ENCODE measurements at regions of chr6 and their contacts with region 1.

Region 1: GRCh38 chr6:51339719-51340118 is 521.0 kb downstream of the TFAP2B start:
- DNase-seq: no peak
- H3K4me3 ChIP-seq: no peak overlapping the region
- H3K27ac ChIP-seq: no peak overlapping the region
- H3K27me3 ChIP-seq: peaks cover 0 to 5% (median 0%) of the 10 kb centered on the region in 45 donors
- CTCF ChIP-seq: no peak

Region 2: DNA sequence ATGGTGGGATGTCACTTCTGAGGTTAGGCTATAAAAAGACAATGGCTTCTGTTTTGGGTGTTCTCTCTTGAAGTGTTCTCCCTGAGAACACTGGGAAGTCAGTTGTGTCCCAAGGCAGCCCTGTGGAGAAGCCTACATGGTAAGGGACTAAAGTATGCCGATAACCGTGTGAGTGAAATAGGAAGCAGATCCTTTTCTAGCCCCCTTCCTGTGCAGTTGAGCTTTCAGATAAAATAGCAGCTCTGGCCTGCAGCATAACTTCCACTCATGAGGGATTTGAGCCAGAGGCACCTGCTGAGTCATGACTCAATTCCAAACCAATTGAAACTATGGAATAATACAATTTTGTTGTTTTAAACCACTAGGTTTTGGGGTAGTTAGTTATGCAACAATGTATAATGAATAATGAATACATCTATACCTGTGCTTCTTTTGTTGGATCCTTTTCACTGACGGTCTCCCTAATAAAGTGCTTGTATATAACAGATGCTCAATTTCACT is 279.4 kb before region 1 on chr6:
- intact Hi-C with region 1: loop called in 1 of 2 experiments (anchors 10 kb)
- DNase-seq: no peak
- H3K4me3 ChIP-seq: no peak overlapping the region
- H3K27ac ChIP-seq: no peak overlapping the region
- H3K27me3 ChIP-seq: peaks cover 0 to 8% (median 0%) of the 10 kb centered on the region in 45 donors
- CTCF ChIP-seq: no peak

Region 3: GRCh38 chr6:51365566-51365965 is 25.8 kb after region 1 on chr6:
- intact Hi-C with region 1: no loop called
- DNase-seq: no peak
- H3K4me3 ChIP-seq: no peak overlapping the region
- H3K27ac ChIP-seq: no peak overlapping the region
- H3K27me3 ChIP-seq: peaks cover 0 to 3% (median 0%) of the 10 kb centered on the region in 45 donors
- CTCF ChIP-seq: no peak

Region 4: DNA sequence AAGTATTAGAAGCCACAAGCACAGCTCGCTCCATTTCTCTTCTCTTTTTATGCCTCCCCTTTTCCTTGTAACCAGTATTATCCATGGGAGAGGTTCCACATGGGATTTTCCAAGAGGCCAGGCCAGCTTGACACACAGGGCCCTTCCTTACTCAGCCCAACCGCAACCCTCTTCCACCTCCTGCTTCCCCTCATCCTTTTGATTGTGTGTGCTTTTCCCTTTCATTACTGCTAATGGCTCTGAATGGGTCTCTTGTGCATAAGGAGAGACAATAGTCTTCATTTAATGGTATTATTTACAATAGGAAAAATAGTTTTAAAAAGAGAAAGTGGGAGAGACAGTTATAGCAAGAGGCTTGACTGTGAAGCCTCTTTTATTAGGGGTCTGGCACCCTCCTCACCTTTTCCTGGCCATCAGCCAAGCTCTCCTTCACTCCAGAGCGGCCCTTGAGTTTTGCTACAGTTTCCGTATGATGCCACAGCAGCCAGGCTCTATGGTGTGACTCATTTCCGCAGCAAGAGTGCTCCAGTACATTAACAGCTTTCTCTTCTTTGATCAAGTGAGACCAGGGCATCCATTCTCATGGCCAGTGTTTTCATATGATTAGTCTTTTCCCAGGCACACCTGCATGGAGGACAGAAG is 58.5 kb after region 1 on chr6:
- intact Hi-C with region 1: no loop called
- DNase-seq: no peak
- H3K4me3 ChIP-seq: no peak overlapping the region
- H3K27ac ChIP-seq: no peak overlapping the region
- H3K27me3 ChIP-seq: peaks cover 0 to 10% (median 0%) of the 10 kb centered on the region in 45 donors
- CTCF ChIP-seq: no peak